ENCODE measurements at regions of chr7 and their contacts with region 1.

Region 1: GRCh38 chr7:72622532-72622931 is 205.5 kb downstream of the TYW1B start:
- DNase-seq: no peak
- H3K4me3 ChIP-seq: no peak overlapping the region
- H3K27ac ChIP-seq: no peak overlapping the region
- H3K4me1 ChIP-seq: no peaks in the 10 kb centered on the region
- H3K27me3 ChIP-seq: no peaks in the 10 kb centered on the region
- CTCF ChIP-seq: no peak

Region 2: DNA sequence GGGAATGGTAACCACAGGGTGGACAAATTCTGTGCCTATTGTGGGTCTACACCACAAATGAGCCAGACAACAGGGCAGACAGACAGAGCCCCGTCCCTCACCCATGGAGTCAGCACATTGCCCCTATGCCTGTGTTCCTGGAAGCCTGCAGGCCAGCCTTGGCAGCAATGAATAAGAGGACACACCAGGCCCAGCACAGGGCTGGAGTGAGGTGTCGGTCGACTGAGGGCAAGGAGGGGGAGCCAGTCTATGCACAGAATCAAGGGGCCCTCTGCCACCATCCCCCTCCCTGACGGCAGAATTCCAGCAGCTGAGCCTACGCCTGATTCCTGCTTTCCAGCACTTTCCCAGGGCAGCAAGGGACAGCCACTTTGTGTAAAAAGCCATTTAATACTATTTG is 308.6 kb before region 1 on chr7:
- CTCF ChIA-PET with region 1: interaction called, 10 read pairs
- POLR2A ChIA-PET with region 1: no interaction called
- intact Hi-C with region 1: no loop called
- DNase-seq: no peak
- H3K4me3 ChIP-seq: no peak overlapping the region
- H3K27ac ChIP-seq: no peak overlapping the region
- H3K4me1 ChIP-seq: no peaks in the 10 kb centered on the region
- H3K27me3 ChIP-seq: peaks cover 39% of the 10 kb centered on the region
- CTCF ChIP-seq: no peak